ENCODE measurements at regions of chr1 and their contacts with region 1.

Region 1: DNA sequence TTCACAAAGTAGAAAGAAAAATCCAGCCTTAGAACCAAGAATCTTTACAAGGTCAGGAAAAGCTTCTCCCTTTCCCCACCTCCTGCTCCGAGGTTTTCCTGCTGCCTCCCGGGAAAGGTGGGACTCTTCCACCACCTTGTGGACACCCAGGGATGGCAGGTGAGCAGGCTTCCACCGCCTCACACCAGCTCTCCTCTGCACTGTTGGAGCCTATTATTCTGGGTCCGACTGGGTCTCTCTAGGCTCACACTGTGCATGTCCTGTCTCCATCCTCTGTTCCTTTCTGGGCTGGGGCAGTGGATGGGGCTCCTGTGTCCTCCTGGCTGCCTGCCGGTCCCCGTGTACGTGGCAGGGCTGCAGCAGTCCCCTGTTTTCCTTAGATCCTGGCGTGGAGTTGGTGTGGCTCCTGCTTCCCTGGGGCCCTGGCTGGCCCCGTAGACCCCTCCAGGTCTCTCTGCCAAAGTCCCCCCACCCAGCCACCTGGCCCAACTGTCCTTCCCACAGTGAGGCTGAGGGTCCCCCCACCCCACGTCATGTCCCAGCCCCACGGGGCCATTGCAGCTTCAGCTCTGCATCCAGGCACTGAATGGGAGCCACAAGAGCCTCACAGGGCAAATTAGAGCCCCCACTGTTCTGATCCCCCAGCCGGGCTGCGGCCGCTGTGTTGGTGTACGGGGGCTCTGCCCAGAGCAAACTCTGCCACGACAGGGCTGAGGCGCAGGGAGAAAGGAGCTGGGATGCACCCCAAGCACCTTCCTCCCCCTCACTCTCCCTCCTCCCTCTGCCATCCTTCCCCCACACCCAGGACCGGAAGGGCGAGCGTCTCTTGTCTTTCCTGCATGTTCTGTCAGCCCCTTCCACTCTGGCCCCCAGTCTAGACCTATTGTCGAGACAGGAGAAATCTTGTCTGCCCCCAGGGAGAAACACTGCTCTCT is 3.3 kb upstream of the SLC45A1 start:
- DNase-seq: peak; percentile 24
- H3K4me3 ChIP-seq: no peak overlapping the region
- CTCF ChIP-seq: peak; percentile 94

Region 2: GRCh38 chr1:7975212-7975865 is 339.3 kb before region 1 on chr1:
- CTCF ChIA-PET with region 1: interaction called, 277 read pairs
- POLR2A ChIA-PET with region 1: interaction called, 3 read pairs
- DNase-seq: no peak
- H3K4me3 ChIP-seq: no peak overlapping the region
- CTCF ChIP-seq: peak; percentile 90

Region 3: GRCh38 chr1:8015036-8015808 is 299.4 kb before region 1 on chr1:
- CTCF ChIA-PET with region 1: interaction called, 321 read pairs
- POLR2A ChIA-PET with region 1: interaction called, 3 read pairs
- DNase-seq: peak; percentile 47
- H3K4me3 ChIP-seq: no peak overlapping the region
- CTCF ChIP-seq: peak; percentile 62

Region 4: GRCh38 chr1:8040586-8040985 is 274.0 kb before region 1 on chr1:
- CTCF ChIA-PET with region 1: interaction called, 28 read pairs
- POLR2A ChIA-PET with region 1: no interaction called
- DNase-seq: peak; percentile 90
- H3K4me3 ChIP-seq: no peak overlapping the region
- CTCF ChIP-seq: no peak

Region 5: DNA sequence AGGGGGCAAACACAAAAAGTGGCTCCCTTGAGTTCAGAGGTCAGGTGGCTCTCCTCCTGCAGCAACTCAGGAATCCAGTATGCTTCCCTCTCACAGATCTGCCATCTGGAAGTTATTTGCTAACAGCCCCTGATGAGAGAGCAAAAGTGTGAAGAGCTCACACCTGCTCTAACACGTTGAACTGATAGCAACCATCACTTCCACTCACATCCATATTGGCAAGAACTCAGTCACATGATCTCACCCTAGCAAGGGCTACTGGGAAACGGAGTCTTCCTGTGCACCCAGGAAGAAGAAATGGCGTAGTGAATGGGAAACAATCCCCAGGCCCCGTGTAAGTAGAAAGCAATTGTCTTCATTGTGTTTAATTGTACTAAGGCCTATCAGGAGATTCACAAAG is 17.4 kb before region 1 on chr1:
- CTCF ChIA-PET with region 1: interaction called, 13 read pairs
- POLR2A ChIA-PET with region 1: no interaction called
- DNase-seq: no peak
- H3K4me3 ChIP-seq: no peak overlapping the region
- CTCF ChIP-seq: no peak

Region 6: DNA sequence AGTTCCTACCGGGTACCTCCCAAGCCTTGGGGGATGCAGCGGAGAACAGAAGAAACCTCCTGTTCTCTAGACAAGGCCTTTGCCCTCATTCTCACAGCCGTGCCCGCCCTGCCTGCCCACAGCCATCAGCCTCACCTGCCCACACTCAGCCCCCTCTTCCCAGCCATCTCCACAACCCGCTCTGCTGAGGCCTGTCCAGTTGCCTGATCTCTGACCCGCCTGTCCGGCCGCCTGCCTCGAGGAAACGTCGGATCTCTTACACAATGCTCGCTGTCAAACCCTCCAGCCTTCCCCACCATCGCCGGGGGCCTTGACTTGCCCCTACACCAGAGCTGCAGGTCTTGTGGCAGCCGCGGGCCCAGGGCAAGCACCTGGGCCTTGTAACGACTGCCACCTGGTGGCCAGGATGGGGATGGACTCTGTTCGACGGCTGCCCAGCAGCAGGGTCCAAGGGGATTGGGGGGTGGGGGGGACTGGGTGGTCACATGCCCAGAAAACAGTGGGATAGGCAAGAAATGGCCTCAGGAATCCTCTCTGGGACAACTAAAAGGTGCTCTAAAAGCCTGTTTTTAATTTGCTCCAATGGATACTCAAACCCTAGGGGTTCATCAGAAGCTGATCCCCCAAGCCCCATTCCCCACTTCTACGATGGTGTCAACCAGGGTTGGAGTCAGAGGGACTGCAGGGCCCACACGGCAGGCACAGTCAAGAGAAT is 34.3 kb after region 1 on chr1:
- CTCF ChIA-PET with region 1: interaction called, 16 read pairs
- POLR2A ChIA-PET with region 1: no interaction called
- DNase-seq: no peak
- H3K4me3 ChIP-seq: no peak overlapping the region
- CTCF ChIP-seq: peak; percentile 79

Region 7: DNA sequence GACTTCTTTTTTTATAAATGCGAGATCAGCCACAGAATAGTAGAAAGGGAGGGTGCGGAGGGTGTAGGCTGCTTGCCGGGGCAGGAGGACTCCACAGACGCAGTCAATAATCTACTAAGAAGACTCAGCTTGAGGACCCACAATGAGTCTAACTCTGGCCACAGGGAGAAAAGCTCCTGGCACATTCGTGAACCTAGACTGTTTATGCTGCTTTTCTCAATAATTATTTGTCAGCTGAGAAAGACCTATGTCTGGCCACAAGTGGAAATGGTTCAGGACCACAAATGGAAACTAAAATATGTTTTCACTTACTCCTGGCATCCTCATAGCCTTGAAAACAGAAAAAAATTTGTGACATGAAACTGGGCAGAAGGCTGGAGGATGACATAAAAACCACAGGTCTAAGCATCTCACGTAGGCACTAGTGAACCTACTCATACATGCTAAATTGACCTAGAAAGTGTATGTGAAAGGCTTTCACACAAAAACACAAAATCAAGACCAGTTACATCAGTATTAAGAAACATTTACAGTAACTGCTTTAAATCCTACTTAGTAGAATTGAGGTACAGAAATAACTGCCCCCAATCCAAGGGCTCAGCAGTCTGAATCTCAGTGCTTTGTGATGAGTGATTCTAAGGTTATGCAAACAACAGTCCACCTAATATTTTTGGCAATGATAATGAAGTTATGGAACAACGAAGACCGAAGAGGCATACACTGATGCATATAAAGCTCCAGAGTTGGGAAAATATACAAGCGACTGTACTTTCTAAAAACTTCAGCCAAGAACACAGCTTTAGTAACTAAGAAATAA is 162.8 kb after region 1 on chr1:
- CTCF ChIA-PET with region 1: no interaction called
- POLR2A ChIA-PET with region 1: no interaction called
- DNase-seq: peak; percentile 83
- H3K4me3 ChIP-seq: no peak overlapping the region
- CTCF ChIP-seq: no peak